Activated CD4-positive, alpha-beta memory T cell treated with anti-CD3 and anti-CD28 coated beads, Interleukin-2, amount 10 ng/mL, durations not matched to agents 7 days and 5 days (primary cell): ENCODE measurements at regions of chr19 and their contacts with region 1.

Region 1: DNA sequence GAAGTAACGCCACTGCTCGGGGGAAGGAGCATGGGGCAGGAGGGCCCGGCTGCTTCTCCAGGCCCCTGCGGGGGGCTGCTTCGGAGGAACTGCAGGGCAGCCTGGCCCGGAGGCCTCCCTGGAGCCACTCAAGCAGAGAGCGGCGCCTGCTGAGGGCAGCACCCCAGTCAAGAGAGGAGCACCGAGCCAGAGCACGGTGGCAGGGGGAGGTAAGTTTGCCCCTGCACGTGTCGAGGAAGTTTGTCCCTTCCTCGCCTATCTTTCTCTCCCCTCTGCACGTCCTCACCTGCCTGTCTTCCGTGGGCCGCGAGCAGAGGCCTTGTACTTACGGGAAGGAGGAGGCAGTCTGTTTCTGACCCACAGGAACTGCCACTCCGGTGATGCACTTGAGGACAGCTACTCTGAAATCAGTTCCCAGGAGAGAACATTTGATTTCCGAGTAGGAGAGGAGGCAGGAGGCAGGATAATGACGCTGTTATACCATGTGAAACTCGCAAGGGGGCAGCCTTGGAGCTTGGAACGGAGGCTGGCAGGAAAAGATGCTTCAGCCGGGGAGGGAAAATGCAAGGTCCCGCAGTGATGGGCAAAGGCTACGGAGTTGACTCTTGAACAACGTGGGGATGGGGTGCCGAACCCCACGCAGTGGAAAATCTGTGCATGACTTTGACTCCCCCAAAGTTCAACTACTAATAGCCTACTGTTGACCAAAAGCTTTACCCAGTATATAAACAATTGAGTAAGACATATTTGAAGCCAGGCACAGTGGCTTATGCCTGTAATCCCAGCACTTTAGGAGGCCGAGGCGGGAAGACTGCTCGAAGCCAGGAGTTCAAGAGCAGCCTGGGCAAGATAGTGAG is 5.0 kb downstream of the FFAR1 start:
- DNase-seq: peak; percentile 76
- H3K4me3 Mint-ChIP-seq: no peak overlapping the region
- H3K27ac Mint-ChIP-seq: no peak overlapping the region
- H3K4me1 Mint-ChIP-seq: peaks cover 16% of the 10 kb centered on the region
- H3K27me3 Mint-ChIP-seq: peaks cover 20% of the 10 kb centered on the region

Region 2: DNA sequence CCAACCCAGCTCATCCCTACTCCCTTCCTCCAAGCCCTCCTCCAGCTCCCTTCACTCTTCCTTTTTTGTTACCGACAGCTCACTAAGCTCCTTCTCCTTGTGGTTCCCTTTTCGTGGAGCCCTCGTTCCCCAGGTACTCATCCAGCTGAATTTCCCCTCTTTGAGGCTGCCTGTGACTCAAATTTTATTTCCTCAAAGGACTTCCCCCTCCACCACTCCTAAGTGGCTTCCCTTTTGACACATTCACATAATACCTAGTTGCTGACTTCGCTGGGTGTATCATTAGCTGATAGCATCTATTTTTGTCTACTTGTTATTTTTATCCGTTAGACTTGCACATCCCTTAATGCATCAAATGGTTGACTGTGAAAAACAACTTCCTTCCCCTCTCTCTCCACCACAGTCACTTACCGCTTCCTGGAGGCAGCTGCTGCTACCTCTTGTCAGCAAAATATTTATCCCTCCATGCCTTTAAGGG is 109.8 kb after region 1 on chr19:
- CTCF ChIA-PET with region 1: interaction called, 78 read pairs
- POLR2A ChIA-PET with region 1: interaction called, 12 read pairs
- DNase-seq: peak; percentile 77
- H3K4me3 Mint-ChIP-seq: peak overlapping the region; percentile 63
- H3K27ac Mint-ChIP-seq: peak overlapping the region; percentile 95
- H3K4me1 Mint-ChIP-seq: peaks cover 49% of the 10 kb centered on the region
- H3K27me3 Mint-ChIP-seq: peaks cover 9% of the 10 kb centered on the region

Region 3: DNA sequence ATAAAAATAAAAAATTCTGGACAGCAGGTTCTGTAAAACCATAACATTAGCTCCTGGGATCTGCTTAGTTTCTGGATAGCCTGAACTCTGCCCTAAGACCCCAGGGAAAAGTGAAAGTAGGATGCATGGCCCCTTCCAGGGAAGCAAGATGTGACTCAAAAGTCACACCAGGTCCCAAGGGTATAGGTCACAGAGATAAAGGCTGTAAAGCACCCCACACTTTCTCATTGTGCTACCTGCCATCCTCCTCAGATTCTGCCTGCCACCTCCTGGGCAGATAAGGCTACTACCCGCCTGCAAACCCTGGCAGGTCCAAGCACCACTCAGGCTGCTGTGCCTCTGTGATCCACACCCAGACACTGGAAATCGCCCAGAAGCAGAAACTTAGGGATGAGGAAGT is 116.0 kb after region 1 on chr19:
- CTCF ChIA-PET with region 1: interaction called, 78 read pairs
- POLR2A ChIA-PET with region 1: interaction called, 12 read pairs
- DNase-seq: peak; percentile 77
- H3K4me3 Mint-ChIP-seq: no peak overlapping the region
- H3K27ac Mint-ChIP-seq: no peak overlapping the region
- H3K4me1 Mint-ChIP-seq: peaks cover 17% of the 10 kb centered on the region
- H3K27me3 Mint-ChIP-seq: peaks cover 6% of the 10 kb centered on the region

Region 4: DNA sequence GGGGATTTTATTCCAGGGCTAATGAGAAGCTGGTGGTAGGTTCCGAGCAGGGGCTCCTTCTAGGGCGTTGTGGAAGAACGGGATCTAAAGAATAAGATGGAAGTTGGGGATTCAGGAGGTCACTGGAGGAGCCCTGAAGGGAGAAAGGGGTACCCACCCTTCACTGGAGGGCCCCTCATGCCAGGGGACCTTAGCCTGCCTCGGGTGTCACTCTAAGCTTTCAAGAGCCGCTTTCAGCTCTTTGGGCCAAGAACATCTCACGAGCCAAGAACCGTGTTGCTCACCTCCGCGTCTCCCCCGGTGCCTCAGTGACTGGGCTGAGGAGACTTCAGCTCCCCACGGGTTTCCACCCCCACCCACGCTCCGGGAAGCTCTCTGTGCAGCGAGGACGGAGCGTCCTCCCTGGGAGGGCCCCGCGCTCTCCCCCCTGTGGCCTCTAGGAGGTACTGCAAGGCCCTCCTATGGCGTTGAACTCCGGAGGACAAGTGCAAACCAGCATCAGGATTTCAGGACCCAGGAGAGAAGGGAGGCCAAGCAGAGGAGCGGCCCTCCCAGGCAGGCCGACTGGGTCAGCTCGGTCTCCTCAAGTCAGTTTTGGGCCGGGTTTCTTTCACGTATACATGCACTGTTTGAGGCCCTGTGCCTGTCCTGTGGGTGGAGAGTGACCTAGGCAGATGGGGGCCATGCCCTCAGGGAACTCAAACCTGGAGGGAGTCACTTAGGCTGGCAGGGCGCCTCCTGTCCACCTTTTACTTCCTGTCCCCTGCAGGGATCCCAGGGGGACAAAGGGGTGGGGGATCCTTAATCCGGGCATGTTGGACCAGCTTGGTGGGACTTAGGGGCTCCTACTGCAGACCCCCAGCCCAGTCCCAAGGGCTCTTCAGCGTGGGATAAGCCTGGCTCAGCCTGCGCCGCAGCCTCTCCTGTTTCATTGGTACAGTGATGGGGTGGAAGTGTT is 142.7 kb after region 1 on chr19:
- CTCF ChIA-PET with region 1: interaction called, 25 read pairs
- POLR2A ChIA-PET with region 1: interaction called, 3 read pairs
- DNase-seq: peak; percentile 67
- H3K4me3 Mint-ChIP-seq: no peak overlapping the region
- H3K27ac Mint-ChIP-seq: no peak overlapping the region
- H3K4me1 Mint-ChIP-seq: peaks cover 1% of the 10 kb centered on the region
- H3K27me3 Mint-ChIP-seq: peaks cover 29% of the 10 kb centered on the region

Region 5: DNA sequence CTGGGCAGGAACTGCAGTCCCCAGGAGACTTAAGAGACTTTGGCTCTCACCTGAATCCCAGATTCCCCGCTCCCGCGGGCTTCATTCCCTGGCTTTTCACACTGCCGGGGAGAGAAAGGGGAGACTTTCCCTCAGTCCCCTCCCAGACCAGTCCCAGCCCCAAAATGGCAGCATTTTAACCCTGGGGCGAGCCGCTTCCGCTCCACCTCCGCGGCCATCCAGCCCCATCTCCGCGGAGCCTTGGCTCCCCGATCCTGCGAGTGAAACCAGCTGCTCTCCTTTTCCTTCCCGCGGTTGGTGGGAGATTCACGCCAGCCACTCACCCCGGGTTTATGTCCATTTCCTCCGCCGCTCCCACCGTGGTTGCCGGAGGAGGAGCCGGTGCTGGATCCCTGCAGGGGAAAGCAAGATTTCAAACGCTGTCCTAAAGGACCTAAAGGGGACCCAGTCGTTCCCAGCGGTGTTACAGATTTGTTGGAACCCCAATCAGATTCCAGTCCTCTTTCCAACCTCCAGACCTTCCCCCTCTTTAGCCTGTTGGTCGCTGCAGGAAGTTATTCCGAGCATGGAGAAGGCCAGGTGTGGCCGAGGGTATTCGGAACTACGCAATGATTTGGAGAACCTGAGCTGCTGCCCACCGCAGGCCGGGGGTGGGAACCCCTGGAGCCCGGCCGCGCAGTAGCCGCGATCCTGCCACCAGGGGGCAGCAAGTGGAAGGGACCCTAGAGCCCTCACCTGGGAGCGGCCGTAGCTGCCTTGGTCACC is 157.4 kb after region 1 on chr19:
- CTCF ChIA-PET with region 1: interaction called, 12 read pairs
- POLR2A ChIA-PET with region 1: no interaction called
- DNase-seq: peak; percentile 70
- H3K4me3 Mint-ChIP-seq: no peak overlapping the region
- H3K27ac Mint-ChIP-seq: no peak overlapping the region
- H3K4me1 Mint-ChIP-seq: peaks cover 17% of the 10 kb centered on the region
- H3K27me3 Mint-ChIP-seq: peaks cover 67% of the 10 kb centered on the region